Activated CD4-positive, alpha-beta memory T cell treated with anti-CD3 and anti-CD28 coated beads for 36 hours (primary cell): ENCODE measurements at regions of chr10 and their contacts with region 1.

Region 1: DNA sequence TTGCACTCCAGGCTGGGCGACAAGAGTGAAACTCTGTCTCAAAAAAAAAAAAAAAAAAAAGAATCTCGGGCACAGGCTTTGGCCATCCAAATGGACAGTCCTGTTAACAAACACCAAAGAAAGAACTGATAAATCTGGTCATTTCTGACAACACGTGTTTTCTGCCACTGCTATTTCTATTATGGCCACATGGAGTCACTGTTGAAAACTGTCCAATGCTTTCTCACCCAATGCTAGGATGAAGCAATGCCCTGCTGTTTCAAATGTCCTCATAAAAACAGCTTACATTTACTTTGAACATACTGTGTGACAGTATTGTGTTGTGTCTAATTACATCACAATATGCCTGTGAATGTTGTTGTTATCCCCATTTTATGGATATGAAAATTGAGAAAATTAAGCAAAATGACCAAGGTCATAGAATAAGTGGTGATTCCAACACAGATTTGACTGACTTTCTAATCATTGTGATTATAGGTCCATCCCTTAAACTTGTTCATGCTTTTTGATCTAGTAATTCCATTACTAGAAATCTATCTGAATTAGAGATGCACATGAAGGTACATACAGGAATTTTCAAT is 19.9 kb upstream of the MAP3K8 start:
- DNase-seq: no peak
- H3K4me3 Mint-ChIP-seq: no peak overlapping the region
- H3K27ac Mint-ChIP-seq: no peak overlapping the region
- H3K4me1 Mint-ChIP-seq: peaks cover 17% of the 10 kb centered on the region
- H3K27me3 Mint-ChIP-seq: no peaks in the 10 kb centered on the region

Region 2: DNA sequence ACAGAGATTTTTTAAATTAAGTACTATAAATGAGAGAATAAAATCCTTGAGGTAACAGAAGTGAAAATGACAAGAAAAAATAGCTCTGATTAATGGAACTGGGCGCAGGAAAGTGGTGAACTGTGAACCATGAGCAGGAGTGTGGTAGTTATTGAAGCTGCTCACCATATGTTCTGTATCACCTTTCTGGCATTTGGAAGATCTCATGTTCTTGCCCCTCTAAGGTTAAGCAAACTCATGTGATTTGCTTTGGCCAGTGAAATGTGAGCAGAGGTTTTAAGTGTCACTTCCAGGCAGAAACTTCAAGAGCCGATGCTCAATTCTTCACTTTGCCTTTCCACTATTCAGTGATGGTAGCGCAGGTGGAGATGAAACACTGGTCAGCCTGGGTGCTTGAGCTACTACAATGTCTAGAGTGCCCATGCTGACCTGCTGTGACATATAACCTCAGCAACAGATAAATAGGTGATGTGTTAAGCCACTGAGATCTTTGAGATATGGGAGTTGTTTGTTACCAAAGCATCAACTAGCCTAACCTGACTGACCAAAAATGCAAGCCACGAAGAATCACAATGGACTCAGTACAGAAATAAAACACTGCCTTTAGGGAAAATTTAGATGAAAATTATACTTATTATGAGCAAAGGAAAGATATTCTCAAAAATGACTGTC is 83.5 kb before region 1 on chr10:
- CTCF ChIA-PET with region 1: no interaction called
- POLR2A ChIA-PET with region 1: no interaction called
- intact Hi-C with region 1: no loop called
- DNase-seq: no peak
- H3K4me3 Mint-ChIP-seq: no peak overlapping the region
- H3K27ac Mint-ChIP-seq: no peak overlapping the region
- H3K4me1 Mint-ChIP-seq: no peaks in the 10 kb centered on the region
- H3K27me3 Mint-ChIP-seq: no peaks in the 10 kb centered on the region

Region 3: GRCh38 chr10:30427512-30428362 is 13.7 kb after region 1 on chr10:
- CTCF ChIA-PET with region 1: interaction called, 18 read pairs
- POLR2A ChIA-PET with region 1: interaction called, 16 read pairs
- intact Hi-C with region 1: loop called (anchors 1 kb)
- DNase-seq: peak; percentile 28
- H3K4me3 Mint-ChIP-seq: no peak overlapping the region
- H3K27ac Mint-ChIP-seq: no peak overlapping the region
- H3K4me1 Mint-ChIP-seq: peaks cover 24% of the 10 kb centered on the region
- H3K27me3 Mint-ChIP-seq: no peaks in the 10 kb centered on the region

Region 4: GRCh38 chr10:30447125-30447799 is 33.2 kb after region 1 on chr10:
- CTCF ChIA-PET with region 1: no interaction called
- POLR2A ChIA-PET with region 1: no interaction called
- intact Hi-C with region 1: loop called (anchors 5 kb)
- DNase-seq: peak; percentile 27
- H3K4me3 Mint-ChIP-seq: no peak overlapping the region
- H3K27ac Mint-ChIP-seq: no peak overlapping the region
- H3K4me1 Mint-ChIP-seq: peaks cover 16% of the 10 kb centered on the region
- H3K27me3 Mint-ChIP-seq: no peaks in the 10 kb centered on the region

Region 5: GRCh38 chr10:30529373-30529998 is 115.4 kb after region 1 on chr10:
- CTCF ChIA-PET with region 1: interaction called, 18 read pairs
- POLR2A ChIA-PET with region 1: no interaction called
- intact Hi-C with region 1: loop called (anchors 1 kb)
- DNase-seq: peak; percentile 90
- H3K4me3 Mint-ChIP-seq: peak overlapping the region; percentile 76
- H3K27ac Mint-ChIP-seq: peak overlapping the region; percentile 93
- H3K4me1 Mint-ChIP-seq: peaks cover 60% of the 10 kb centered on the region
- H3K27me3 Mint-ChIP-seq: no peaks in the 10 kb centered on the region

Region 6: DNA sequence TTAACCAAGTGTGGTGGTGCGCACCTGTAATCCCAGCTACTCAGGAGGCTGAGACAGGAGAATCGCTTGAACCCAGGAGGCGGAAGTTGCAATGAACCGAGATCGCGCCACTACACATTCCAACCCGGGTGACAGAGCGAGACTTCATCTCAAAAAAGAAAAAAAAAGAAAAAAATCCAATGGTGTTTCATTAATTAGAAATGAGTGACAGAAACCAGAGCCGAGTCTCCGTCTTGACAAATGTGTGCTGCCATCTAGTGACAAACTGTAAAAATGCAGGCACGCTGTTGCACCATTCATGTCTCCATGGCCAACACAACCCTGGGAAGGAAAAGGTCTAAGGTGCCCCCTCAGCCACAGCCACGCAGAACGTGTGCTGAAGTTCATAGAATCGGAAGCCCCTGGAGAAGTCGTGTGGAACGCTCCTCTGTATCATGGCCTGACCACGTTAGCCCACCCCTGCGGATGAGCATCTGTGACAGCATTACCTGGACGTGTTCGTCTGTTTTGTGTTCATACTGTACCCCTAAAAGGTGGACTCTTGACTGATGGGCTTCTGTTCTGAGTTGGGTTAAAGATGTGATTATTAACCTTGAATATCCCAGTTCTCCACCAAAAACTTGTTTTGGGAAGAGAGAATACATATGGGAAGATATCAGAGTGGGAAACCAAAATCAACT is 120.5 kb after region 1 on chr10:
- CTCF ChIA-PET with region 1: interaction called, 18 read pairs
- POLR2A ChIA-PET with region 1: no interaction called
- intact Hi-C with region 1: loop called (anchors 1 kb)
- DNase-seq: peak; percentile 78
- H3K4me3 Mint-ChIP-seq: no peak overlapping the region
- H3K27ac Mint-ChIP-seq: no peak overlapping the region
- H3K4me1 Mint-ChIP-seq: peaks cover 20% of the 10 kb centered on the region
- H3K27me3 Mint-ChIP-seq: no peaks in the 10 kb centered on the region

Region 7: GRCh38 chr10:30792025-30792424 is 377.9 kb after region 1 on chr10:
- CTCF ChIA-PET with region 1: no interaction called
- POLR2A ChIA-PET with region 1: no interaction called
- intact Hi-C with region 1: no loop called
- DNase-seq: no peak
- H3K4me3 Mint-ChIP-seq: no peak overlapping the region
- H3K27ac Mint-ChIP-seq: peak overlapping the region; percentile 73
- H3K4me1 Mint-ChIP-seq: peaks cover 31% of the 10 kb centered on the region
- H3K27me3 Mint-ChIP-seq: no peaks in the 10 kb centered on the region